Lower leg skin (tissue), 4 donors: ENCODE measurements at regions of chr11 and their contacts with region 1.

Region 1: DNA sequence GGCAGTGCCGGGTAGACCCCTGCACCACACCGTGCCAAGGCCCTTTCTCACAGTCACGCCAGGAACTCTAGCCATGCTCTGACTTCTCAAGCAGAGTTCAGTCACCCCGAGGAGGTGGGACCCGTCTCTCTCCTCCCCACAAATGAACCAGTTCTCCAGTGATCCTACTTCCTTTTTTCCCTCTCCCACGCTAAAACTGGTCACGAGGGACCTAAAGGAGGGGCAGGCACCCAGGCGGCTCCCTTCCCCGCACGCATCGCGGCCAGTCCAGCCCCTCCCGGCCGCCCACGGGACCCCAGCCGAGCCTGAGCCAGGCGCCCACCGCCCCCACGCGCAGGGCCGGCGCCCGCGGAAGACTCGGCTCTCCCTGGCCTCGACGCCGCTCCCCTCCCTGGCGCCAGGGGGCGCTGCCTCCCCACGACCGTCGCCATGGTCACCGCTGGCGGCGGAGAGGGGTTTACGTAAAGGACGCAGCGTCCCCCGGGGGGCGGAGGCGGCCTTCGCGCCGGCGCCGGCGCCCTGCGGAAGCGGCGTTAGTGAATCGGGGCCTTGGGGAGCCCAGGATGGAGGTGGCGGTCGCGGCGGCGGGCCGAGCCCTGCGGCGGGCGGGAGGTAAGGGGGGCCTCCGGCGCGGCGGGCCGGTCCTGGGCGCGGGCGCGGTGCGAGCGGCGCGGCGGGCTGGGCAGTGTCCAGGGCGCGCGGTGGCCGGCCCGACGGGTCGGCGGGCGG is at the start of gene DAGLA:
- DNase-seq: peak; percentile 47 to 95
- H3K4me3 ChIP-seq: no peak within 1 kb of the TSS
- CTCF ChIP-seq: peak in 1 of 3 donors; percentile 38
- POLR2A ChIP-seq: no peak
- total RNA-seq, gene DAGLA: 0.23 to 1.8 (median 0.79) TPM

Region 2: GRCh38 chr11:60717956-60718355 is 962.1 kb before region 1 on chr11:
- intact Hi-C with region 1: no loop called
- DNase-seq: no peak
- H3K4me3 ChIP-seq: no peak overlapping the region
- CTCF ChIP-seq: no peak
- POLR2A ChIP-seq: no peak

Region 3: GRCh38 chr11:61734767-61735166 is 54.7 kb after region 1 on chr11:
- intact Hi-C with region 1: loop called (anchors 2 kb)
- DNase-seq: no peak
- H3K4me3 ChIP-seq: no peak overlapping the region
- CTCF ChIP-seq: no peak
- POLR2A ChIP-seq: no peak